K562 (cell line): ENCODE measurements at regions of chr10 and their contacts with region 1.

Region 1: GRCh38 chr10:103685880-103686669 is 169.3 kb downstream of the SH3PXD2A start:
- DNase-seq: peak; percentile 72 to 82 (median 74)
- ATAC-seq: peak; percentile 94
- H3K4me3 ChIP-seq: no peak overlapping the region
- H3K27ac ChIP-seq: no peak overlapping the region
- H3K4me1 ChIP-seq: peaks cover 9 to 10% of the 10 kb centered on the region in 2 experiments; a peak in 3 of 5 replicates
- H3K27me3 ChIP-seq: no peaks in the 10 kb centered on the region
- CTCF ChIP-seq: peak; percentile 86 to 89 (median 88)
- EP300 ChIP-seq: no peak
- POLR2A ChIP-seq: no peak
- RAD21 ChIP-seq: peak; percentile 74 to 86

Region 2: GRCh38 chr10:103598654-103599115 is 87.4 kb before region 1 on chr10:
- CTCF ChIA-PET with region 1: interaction called, 25 read pairs
- POLR2A ChIA-PET with region 1: no interaction called
- in situ Hi-C with region 1: loop called (anchors 5 kb)
- intact Hi-C with region 1: loop called (anchors 1 kb)
- DNase-seq: peak; percentile 62 to 70 (median 66)
- ATAC-seq: peak; percentile 95
- H3K4me3 ChIP-seq: no peak overlapping the region
- H3K27ac ChIP-seq: no peak overlapping the region
- H3K4me1 ChIP-seq: no peaks in the 10 kb centered on the region; a peak in 1 of 5 replicates
- H3K27me3 ChIP-seq: no peaks in the 10 kb centered on the region
- CTCF ChIP-seq: peak; percentile 59 to 78 (median 75)
- EP300 ChIP-seq: no peak
- POLR2A ChIP-seq: no peak
- RAD21 ChIP-seq: peak; percentile 79 to 83

Region 3: DNA sequence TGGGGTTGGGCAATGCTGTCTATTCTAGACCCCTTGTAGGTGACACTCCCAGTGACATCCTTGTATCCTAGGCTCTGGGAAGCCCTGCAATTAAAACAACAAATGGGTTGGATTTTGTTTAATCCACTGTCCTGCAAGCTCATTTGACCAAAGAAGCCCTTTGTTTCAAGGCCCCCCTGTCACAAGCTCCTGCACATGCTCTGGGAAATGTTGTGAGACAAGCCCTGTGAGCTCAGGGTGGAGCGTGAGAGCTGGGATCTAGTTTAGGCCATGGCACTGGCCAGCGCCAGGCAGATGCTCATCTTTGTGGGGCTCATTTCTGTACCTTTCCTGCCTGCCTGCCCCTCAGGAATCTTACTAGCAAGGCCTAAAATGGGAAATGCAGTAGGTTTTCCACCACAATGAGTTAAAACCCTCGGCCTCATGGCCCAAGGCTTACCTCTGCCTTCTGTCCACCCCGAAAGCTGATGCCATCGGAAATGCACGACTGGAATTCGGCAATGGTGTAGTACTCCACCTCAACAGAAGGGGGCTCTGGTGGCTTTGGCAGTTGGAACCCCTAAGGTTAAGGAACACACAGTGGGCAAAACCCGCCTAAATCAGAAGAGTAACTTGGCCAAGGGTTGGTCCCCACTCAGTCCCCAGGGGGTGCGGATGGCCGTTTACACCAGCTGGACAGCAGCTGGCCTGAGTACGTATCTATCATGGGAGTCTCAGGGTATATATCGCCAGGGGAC is 80.5 kb before region 1 on chr10:
- CTCF ChIA-PET with region 1: interaction called, 9 read pairs
- POLR2A ChIA-PET with region 1: no interaction called
- in situ Hi-C with region 1: loop called (anchors 5 kb)
- intact Hi-C with region 1: loop called (anchors 1 kb)
- DNase-seq: peak; percentile 52 to 65 (median 56)
- ATAC-seq: peak; percentile 84
- H3K4me3 ChIP-seq: no peak overlapping the region
- H3K27ac ChIP-seq: no peak overlapping the region
- H3K4me1 ChIP-seq: peaks cover 3 to 5% of the 10 kb centered on the region in 2 experiments; a peak in 4 of 5 replicates
- H3K27me3 ChIP-seq: no peaks in the 10 kb centered on the region
- CTCF ChIP-seq: peak; percentile 70 to 81 (median 81)
- EP300 ChIP-seq: no peak
- POLR2A ChIP-seq: no peak
- RAD21 ChIP-seq: peak; percentile 60 to 78